PC-9 (cell line): ENCODE measurements at regions of chr22 and their contacts with region 1.

Region 1: GRCh38 chr22:31952459-31952858 is 8.1 kb downstream of the YWHAH start:
- DNase-seq: peak in 1 of 2 experiments; percentile 74
- H3K4me3 ChIP-seq: no peak overlapping the region
- H3K27ac ChIP-seq: peak overlapping the region; percentile 33; the same call in 1 of the 2 replicates
- H3K4me1 ChIP-seq: peaks cover 20% of the 10 kb centered on the region
- H3K27me3 ChIP-seq: no peaks in the 10 kb centered on the region
- CTCF ChIP-seq: no peak

Region 2: GRCh38 chr22:31935966-31936635 is 16.4 kb before region 1 on chr22:
- CTCF ChIA-PET with region 1: interaction called, 11 read pairs
- POLR2A ChIA-PET with region 1: no interaction called
- intact Hi-C with region 1: no loop called
- DNase-seq: no peak
- H3K4me3 ChIP-seq: no peak overlapping the region
- H3K27ac ChIP-seq: no peak overlapping the region
- H3K4me1 ChIP-seq: no peaks in the 10 kb centered on the region
- H3K27me3 ChIP-seq: 0 out of 2 replicates have a peak, but pooled peaks cover 6% of the 10 kb centered on the region
- CTCF ChIP-seq: no peak